PC-9 (cell line): ENCODE measurements at regions of chr2 and their contacts with region 1.

Region 1: DNA sequence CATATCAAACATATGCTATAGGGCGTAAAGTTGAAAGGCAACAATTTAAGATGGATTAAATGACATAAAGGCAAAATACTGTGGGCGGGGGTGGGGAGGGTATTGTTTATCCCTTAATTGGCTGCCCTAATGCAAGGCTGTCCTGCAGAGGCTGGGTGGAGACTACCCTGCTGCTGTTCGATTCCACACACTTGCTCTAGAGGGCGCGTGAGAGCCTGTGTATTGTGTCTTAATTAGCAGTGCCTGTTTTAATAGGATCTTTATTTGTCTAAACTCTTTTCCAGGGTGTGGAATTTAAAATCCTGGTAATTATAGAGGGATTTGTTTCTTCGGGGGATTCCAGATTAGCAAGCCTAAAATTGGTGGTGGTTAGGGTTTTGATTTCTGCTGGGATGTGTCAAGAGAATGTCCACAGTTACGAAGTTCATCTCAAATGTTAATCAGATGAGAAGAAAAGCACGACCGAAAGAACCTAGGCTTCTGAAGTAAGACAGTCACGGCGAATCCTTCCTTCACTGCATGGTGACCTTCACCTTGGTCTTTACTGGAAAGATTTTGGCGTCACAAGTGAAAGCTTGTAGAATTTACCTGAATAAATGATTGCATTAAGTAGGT is 103.5 kb upstream of the MAP3K20 start:
- DNase-seq: peak; percentile 66 to 69
- H3K4me3 ChIP-seq: no peak overlapping the region
- H3K27ac ChIP-seq: no peak overlapping the region
- H3K4me1 ChIP-seq: peaks cover 30% of the 10 kb centered on the region
- H3K27me3 ChIP-seq: no peaks in the 10 kb centered on the region
- CTCF ChIP-seq: peak; percentile 99

Region 2: DNA sequence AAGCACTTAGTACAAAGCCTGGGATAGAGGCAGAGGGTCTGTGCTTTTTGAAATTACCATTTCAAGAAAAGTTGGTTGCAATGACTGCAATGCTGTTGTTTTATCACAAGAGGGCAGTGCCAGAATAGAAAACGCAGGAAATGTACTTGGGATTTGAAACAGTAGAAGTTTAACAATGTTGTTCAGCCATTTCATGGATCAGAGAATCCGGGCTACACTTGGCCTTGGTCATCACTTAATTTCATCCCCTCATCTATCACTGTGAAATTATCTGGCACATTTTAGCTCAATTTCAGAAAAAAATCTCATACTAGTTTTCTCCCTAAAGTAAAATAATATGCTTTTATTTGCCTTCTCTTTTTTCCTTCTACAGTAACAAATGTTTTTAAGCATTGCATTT is 165.6 kb before region 1 on chr2:
- CTCF ChIA-PET with region 1: no interaction called
- POLR2A ChIA-PET with region 1: no interaction called
- intact Hi-C with region 1: loop called (anchors 1 kb)
- DNase-seq: peak; percentile 23 to 68
- H3K4me3 ChIP-seq: no peak overlapping the region
- H3K27ac ChIP-seq: no peak overlapping the region
- H3K4me1 ChIP-seq: no peaks in the 10 kb centered on the region
- H3K27me3 ChIP-seq: no peaks in the 10 kb centered on the region
- CTCF ChIP-seq: peak; percentile 100